Heart left ventricle (tissue), 16 donors: ENCODE measurements at regions of chr9 and their contacts with region 1.

Region 1: GRCh38 chr9:132575005-132575609 is 7.3 kb upstream of the BARHL1 start:
- DNase-seq: peak; percentile 54 to 83 (median 66)
- ATAC-seq: peak; percentile 59 to 91 (median 85)
- H3K4me3 ChIP-seq: no peak overlapping the region
- H3K27ac ChIP-seq: no peak overlapping the region
- H3K4me1 ChIP-seq: peaks cover 0 to 5% (median 0%) of the 10 kb centered on the region in 12 donors
- H3K27me3 ChIP-seq: peaks cover 22 to 64% (median 34%) of the 10 kb centered on the region in 9 donors
- CTCF ChIP-seq: peak; percentile 53 to 82 (median 70)
- POLR2A ChIP-seq: no peak

Region 2: DNA sequence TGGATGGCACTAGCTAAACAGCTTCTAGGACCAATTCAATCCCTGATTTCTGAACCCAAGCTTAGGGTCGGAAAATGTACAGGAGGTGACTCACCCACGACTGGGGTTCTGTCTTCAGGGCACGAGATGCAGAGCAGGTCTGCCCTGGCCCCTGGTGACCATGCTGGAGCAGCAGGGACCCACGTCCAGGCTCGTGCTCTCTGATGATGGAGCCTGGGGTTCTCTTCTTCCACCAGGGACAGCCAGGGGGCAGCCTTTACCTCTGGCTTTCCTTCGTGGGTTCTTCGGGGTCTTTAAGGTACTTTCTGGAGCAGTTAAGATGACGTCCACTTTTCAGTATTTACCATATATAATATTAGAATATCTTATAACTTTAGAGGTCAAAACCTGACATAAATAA is 163.0 kb before region 1 on chr9:
- intact Hi-C with region 1: loop called (anchors 1 to 5 kb)
- DNase-seq: no peak
- ATAC-seq: no peak
- H3K4me3 ChIP-seq: no peak overlapping the region
- H3K27ac ChIP-seq: no peak overlapping the region
- H3K4me1 ChIP-seq: peaks cover 0 to 41% (median 23%) of the 10 kb centered on the region in 12 donors
- H3K27me3 ChIP-seq: peaks cover 0 to 69% (median 40%) of the 10 kb centered on the region in 9 donors
- CTCF ChIP-seq: peak; percentile 29 to 60 (median 47)
- POLR2A ChIP-seq: no peak

Region 3: GRCh38 chr9:132769906-132770810 is 195.1 kb after region 1 on chr9:
- intact Hi-C with region 1: no loop called
- DNase-seq: peak; percentile 59 to 83 (median 63)
- ATAC-seq: peak; percentile 69 to 92 (median 90)
- H3K4me3 ChIP-seq: peak overlapping the region; percentile 49 to 95 (median 72)
- H3K27ac ChIP-seq: peak overlapping the region in 11 of 12 donors; percentile 22 to 88 (median 58)
- H3K4me1 ChIP-seq: peaks cover 0 to 20% (median 9%) of the 10 kb centered on the region in 12 donors
- H3K27me3 ChIP-seq: no peaks in the 10 kb centered on the region
- CTCF ChIP-seq: no peak
- POLR2A ChIP-seq: no peak